ENCODE measurements at regions of chr3 and their contacts with region 1.

Region 1: GRCh38 chr3:53030619-53031449 is 15.0 kb downstream of the SFMBT1 start:
- DNase-seq: peak; percentile 33 to 74 (median 53)
- ATAC-seq: peak; percentile 94
- H3K4me3 ChIP-seq: no peak overlapping the region
- H3K4me3 Mint-ChIP-seq: peak overlapping the region; percentile 53
- H3K27ac ChIP-seq: no peak overlapping the region
- H3K27ac Mint-ChIP-seq: peak overlapping the region; percentile 88
- H3K4me1 ChIP-seq: peaks cover 36% of the 10 kb centered on the region
- H3K4me1 Mint-ChIP-seq: peaks cover 65% of the 10 kb centered on the region
- H3K27me3 ChIP-seq: no peaks in the 10 kb centered on the region
- H3K27me3 Mint-ChIP-seq: no peaks in the 10 kb centered on the region
- CTCF ChIP-seq: no peak

Region 2: GRCh38 chr3:51538459-51539290 is 1492.2 kb before region 1 on chr3 and contains the start of gene RAD54L2:
- CTCF ChIA-PET with region 1: no interaction called
- POLR2A ChIA-PET with region 1: no interaction called
- intact Hi-C with region 1: loop called in 1 of 2 experiments (anchors 10 kb)
- DNase-seq: peak; percentile 44 to 90 (median 72)
- ATAC-seq: peak; percentile 91
- H3K4me3 ChIP-seq: peak within 1 kb of the TSS; percentile 87
- H3K4me3 Mint-ChIP-seq: peak within 1 kb of the TSS; percentile 98
- H3K27ac ChIP-seq: peak within 1 kb of the TSS; percentile 34 to 65
- H3K27ac Mint-ChIP-seq: peak within 1 kb of the TSS; percentile 89
- H3K4me1 ChIP-seq: peaks cover 27% of the 10 kb centered on the region
- H3K4me1 Mint-ChIP-seq: peaks cover 45% of the 10 kb centered on the region
- H3K27me3 ChIP-seq: no peaks in the 10 kb centered on the region
- H3K27me3 Mint-ChIP-seq: no peaks in the 10 kb centered on the region
- CTCF ChIP-seq: no peak
- total RNA-seq, gene RAD54L2: 39.9 to 41.7 TPM